ENCODE measurements at regions of chr1 and their contacts with region 1.

Region 1: GRCh38 chr1:30684881-30685795 is 38.2 kb downstream of the MATN1 start:
- ATAC-seq: peak in 5 of 8 experiments; percentile 90 to 94 (median 93)
- H3K4me3 ChIP-seq: peak overlapping the region in 4 of 5 donors; percentile 6 to 23 (median 18)
- H3K27ac ChIP-seq: peak overlapping the region in 1 of 2 donors; percentile 28
- H3K4me1 ChIP-seq: peaks cover 8 to 26% of the 10 kb centered on the region in 2 donors

Region 2: DNA sequence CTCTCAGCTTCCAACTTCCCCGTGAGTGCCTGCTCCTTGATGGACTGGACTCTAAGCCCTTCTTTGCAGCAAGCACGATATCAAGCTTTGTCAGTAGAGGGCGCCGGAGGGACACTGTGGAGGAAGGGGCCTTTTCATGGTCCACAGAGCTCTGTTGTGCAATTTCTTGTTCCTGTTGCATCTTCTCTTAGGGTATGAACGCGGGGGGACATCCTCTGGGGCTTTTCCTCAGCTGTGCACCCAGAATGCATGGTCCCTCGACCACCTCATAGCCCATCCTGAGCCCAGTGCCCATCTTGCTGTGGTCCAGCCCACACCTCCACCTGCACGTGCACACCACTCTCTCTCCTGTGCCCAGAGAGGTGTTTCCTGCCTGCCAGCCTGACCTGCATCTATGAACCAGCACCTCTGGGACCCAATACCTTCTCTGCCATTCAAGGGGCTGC is 892.0 kb before region 1 on chr1:
- in situ Hi-C with region 1: loop called in 1 of 9 experiments (anchors 25 kb)
- ATAC-seq: peak; percentile 93 to 99 (median 97)
- H3K4me3 ChIP-seq: no peak overlapping the region
- H3K27ac ChIP-seq: peak overlapping the region in 1 of 2 donors; percentile 44
- H3K4me1 ChIP-seq: peaks cover 0 to 8% of the 10 kb centered on the region in 2 donors

Region 3: GRCh38 chr1:30379684-30380624 is 305.2 kb before region 1 on chr1:
- in situ Hi-C with region 1: no loop called
- ATAC-seq: peak; percentile 37 to 83 (median 48)
- H3K4me3 ChIP-seq: no peak overlapping the region
- H3K27ac ChIP-seq: no peak overlapping the region
- H3K4me1 ChIP-seq: peaks cover 12 to 45% of the 10 kb centered on the region in 2 donors

Measured in motor neuron (in vitro differentiated cells).